CD4-positive, alpha-beta T cell (primary cell): ENCODE measurements at regions of chr20 and their contacts with region 1.

Region 1: DNA sequence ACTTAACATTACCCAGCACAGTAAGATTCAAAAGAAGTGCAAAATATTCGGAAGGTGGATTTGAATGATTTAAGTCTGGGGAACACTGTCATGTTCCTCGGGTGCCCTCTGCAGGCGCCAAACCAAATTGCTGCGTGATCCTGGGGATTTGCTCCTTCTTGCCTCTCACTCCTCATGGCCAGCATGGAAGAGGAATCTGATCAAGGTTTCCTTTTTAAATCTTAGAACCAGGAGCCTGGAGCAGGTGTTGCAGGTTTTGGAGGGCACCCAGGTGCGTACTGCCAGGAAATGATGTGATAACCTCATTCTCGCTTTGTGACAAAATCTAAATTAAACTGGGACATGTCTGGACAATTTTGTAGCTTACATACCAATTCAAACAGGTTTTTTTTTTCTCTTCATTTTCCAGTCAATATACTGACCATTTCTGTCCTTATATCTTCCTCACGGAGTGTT is 8.1 kb upstream of the PFDN4 start:
- DNase-seq: peak; percentile 35 to 79 (median 60)
- ATAC-seq: peak; percentile 71
- H3K4me3 ChIP-seq: no peak overlapping the region
- H3K4me3 Mint-ChIP-seq: no peak overlapping the region
- H3K27ac ChIP-seq: no peak overlapping the region
- H3K27ac Mint-ChIP-seq: no peak overlapping the region
- H3K4me1 ChIP-seq: no peaks in the 10 kb centered on the region
- H3K4me1 Mint-ChIP-seq: no peaks in the 10 kb centered on the region
- H3K27me3 ChIP-seq: no peaks in the 10 kb centered on the region
- H3K27me3 Mint-ChIP-seq: no peaks in the 10 kb centered on the region
- CTCF ChIP-seq: peak; percentile 90

Region 2: DNA sequence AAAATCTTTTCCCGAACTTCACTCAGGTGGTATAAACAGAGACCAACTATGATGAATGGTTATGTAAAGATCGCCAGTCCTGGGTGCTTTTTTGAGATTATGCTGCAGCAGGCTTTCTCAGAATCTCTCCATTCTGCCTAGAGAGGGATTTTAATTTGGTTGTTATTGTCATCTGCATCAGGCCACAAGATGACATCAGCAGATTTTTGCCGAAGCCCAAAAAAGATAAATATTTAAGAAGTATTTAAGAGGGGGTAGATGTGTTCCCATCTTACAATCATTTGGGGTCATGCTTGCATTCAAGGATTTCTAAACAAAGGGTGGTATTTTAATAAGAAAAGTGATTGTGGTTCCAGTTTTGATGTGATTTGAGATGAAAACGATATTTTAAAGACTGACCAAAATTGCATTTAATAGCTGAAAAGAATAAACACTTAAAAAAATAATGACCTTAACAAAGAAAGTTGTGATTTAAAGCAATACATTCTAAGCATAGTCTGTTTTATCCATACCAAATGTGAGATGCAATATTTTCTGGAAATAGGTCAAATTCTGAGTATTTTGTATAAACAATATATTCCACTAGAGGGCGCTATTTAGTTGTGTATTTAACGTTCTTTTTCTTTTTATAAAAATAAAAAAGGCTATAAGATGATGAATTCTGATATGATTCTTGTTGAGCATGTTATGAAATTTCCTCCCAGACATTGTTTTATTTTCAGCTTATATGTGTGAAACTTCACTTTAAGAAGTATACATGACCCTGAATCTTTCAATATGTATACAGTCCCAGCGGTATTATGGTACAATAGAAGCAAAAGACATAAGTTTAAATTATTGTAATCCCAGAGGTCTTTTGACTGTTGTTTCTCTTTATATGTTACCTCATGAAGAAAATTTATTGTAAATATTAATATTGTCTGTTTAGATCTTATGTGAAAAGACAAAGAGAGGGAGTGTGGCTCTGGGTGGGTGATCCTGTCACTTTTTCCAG is 1957.2 kb before region 1 on chr20:
- CTCF ChIA-PET with region 1: no interaction called
- POLR2A ChIA-PET with region 1: no interaction called
- intact Hi-C with region 1: loop called in 1 of 2 experiments (anchors 5 kb)
- DNase-seq: peak in 3 of 14 experiments; percentile 12 to 42 (median 34)
- ATAC-seq: no peak
- H3K4me3 ChIP-seq: no peak overlapping the region
- H3K4me3 Mint-ChIP-seq: no peak overlapping the region
- H3K27ac ChIP-seq: no peak overlapping the region
- H3K27ac Mint-ChIP-seq: no peak overlapping the region
- H3K4me1 ChIP-seq: no peaks in the 10 kb centered on the region
- H3K4me1 Mint-ChIP-seq: peaks cover 5% of the 10 kb centered on the region
- H3K27me3 ChIP-seq: no peaks in the 10 kb centered on the region
- H3K27me3 Mint-ChIP-seq: peaks cover 7% of the 10 kb centered on the region
- CTCF ChIP-seq: peak; percentile 83

Region 3: DNA sequence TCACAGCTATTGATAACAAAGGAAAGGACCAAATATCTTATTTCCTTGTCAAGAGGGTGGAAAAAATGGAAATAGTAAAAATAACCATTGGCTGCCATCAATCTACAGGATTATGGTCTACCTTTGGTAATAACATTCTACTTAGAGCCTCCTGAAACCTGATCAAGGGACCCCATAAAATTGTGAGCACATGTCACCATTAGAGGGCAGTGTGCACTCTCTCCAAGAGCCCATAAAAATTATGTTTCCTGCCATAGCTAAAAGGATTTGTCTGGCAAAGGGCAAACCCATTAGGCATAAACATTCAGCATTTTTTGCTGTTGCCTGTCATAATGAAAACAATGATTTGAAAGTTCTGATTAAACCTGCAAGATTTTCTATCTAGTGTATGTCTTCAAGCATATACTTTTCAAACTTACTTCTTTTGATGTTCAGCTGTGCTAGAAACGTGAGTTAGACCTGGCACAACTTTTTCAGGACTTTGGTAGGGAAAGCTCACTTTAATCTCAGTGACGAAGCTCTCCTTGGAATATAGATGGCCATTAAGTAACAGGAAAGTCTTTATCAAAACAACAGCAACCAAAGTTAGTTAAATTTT is 1887.5 kb before region 1 on chr20:
- CTCF ChIA-PET with region 1: no interaction called
- POLR2A ChIA-PET with region 1: no interaction called
- intact Hi-C with region 1: loop called in 1 of 2 experiments (anchors 5 kb)
- DNase-seq: peak in 13 of 14 experiments; percentile 20 to 83 (median 47)
- ATAC-seq: peak; percentile 73
- H3K4me3 ChIP-seq: no peak overlapping the region
- H3K4me3 Mint-ChIP-seq: no peak overlapping the region
- H3K27ac ChIP-seq: no peak overlapping the region
- H3K27ac Mint-ChIP-seq: no peak overlapping the region
- H3K4me1 ChIP-seq: peaks cover 4% of the 10 kb centered on the region
- H3K4me1 Mint-ChIP-seq: peaks cover 38% of the 10 kb centered on the region
- H3K27me3 ChIP-seq: no peaks in the 10 kb centered on the region
- H3K27me3 Mint-ChIP-seq: no peaks in the 10 kb centered on the region
- CTCF ChIP-seq: peak; percentile 88

Region 4: GRCh38 chr20:53157443-53158408 is 1042.0 kb before region 1 on chr20:
- CTCF ChIA-PET with region 1: no interaction called
- POLR2A ChIA-PET with region 1: no interaction called
- intact Hi-C with region 1: loop called in 1 of 2 experiments (anchors 5 kb)
- DNase-seq: peak in 11 of 14 experiments; percentile 5 to 58 (median 20)
- ATAC-seq: no peak
- H3K4me3 ChIP-seq: no peak overlapping the region
- H3K4me3 Mint-ChIP-seq: no peak overlapping the region
- H3K27ac ChIP-seq: no peak overlapping the region
- H3K27ac Mint-ChIP-seq: no peak overlapping the region
- H3K4me1 ChIP-seq: no peaks in the 10 kb centered on the region
- H3K4me1 Mint-ChIP-seq: peaks cover 39% of the 10 kb centered on the region
- H3K27me3 ChIP-seq: no peaks in the 10 kb centered on the region
- H3K27me3 Mint-ChIP-seq: no peaks in the 10 kb centered on the region
- CTCF ChIP-seq: peak; percentile 50

Region 5: DNA sequence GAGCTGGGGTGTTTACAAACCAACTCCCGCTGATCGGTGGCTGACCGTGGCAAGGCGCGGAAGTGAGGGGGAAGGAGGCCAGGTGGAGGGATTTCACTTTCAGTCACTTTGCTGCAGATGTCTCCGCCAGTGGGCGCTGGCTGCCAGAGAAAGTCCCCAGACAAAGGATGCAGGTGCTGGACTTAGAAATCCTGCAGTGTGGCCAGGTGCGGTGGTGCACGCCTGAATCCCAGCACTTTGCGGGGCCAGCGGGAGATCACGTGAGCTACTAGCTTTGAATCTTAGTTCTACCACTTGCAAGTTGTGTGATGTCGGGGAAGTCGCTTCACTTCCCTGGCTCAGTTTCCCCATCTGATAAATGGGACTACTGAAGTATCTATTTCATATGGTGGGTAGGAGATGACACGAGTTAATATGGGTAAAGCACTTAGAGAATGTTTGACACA is 786.5 kb before region 1 on chr20:
- CTCF ChIA-PET with region 1: no interaction called
- POLR2A ChIA-PET with region 1: no interaction called
- intact Hi-C with region 1: loop called in 1 of 2 experiments (anchors 10 kb)
- DNase-seq: peak; percentile 12 to 70 (median 34)
- ATAC-seq: peak; percentile 24
- H3K4me3 ChIP-seq: no peak overlapping the region
- H3K4me3 Mint-ChIP-seq: no peak overlapping the region
- H3K27ac ChIP-seq: no peak overlapping the region
- H3K27ac Mint-ChIP-seq: no peak overlapping the region
- H3K4me1 ChIP-seq: peaks cover 7% of the 10 kb centered on the region
- H3K4me1 Mint-ChIP-seq: peaks cover 11% of the 10 kb centered on the region
- H3K27me3 ChIP-seq: no peaks in the 10 kb centered on the region
- H3K27me3 Mint-ChIP-seq: no peaks in the 10 kb centered on the region
- CTCF ChIP-seq: peak; percentile 53

Region 6: DNA sequence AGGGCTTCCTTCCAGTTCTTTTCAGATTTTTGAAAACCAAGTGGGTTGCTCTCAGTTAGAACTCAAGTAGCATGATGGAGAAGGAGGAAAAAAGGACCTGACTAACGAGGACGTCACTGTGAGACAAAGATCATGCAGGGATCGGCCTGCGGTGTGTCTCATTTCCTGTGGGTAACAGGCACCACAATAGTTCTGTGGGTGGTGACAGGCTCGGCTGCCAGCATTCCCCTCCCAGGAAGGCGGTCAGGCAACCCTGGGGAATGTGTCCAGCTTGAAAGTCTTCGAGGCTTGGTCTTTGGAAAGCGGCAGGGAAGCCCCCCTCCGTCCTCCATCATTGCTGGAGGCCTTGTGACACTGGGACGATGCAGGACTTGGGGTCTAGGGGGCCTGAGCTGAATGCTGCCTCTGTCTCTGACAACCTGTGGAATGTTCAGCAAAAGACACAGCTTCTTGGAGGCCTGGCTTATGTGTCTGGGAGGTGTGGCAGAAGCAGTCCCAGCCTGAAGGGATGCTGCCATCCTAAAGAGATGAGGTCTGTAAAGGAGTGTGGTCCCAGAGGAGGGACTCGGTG is 250.3 kb before region 1 on chr20:
- CTCF ChIA-PET with region 1: no interaction called
- POLR2A ChIA-PET with region 1: no interaction called
- intact Hi-C with region 1: loop called in 1 of 2 experiments (anchors 5 kb)
- DNase-seq: peak; percentile 59 to 92 (median 74)
- ATAC-seq: peak; percentile 92
- H3K4me3 ChIP-seq: peak overlapping the region; percentile 12
- H3K4me3 Mint-ChIP-seq: peak overlapping the region; percentile 83
- H3K27ac ChIP-seq: peak overlapping the region; percentile 63 to 83
- H3K27ac Mint-ChIP-seq: peak overlapping the region; percentile 99
- H3K4me1 ChIP-seq: peaks cover 31% of the 10 kb centered on the region
- H3K4me1 Mint-ChIP-seq: peaks cover 36% of the 10 kb centered on the region
- H3K27me3 ChIP-seq: no peaks in the 10 kb centered on the region
- H3K27me3 Mint-ChIP-seq: no peaks in the 10 kb centered on the region
- CTCF ChIP-seq: no peak

Region 7: DNA sequence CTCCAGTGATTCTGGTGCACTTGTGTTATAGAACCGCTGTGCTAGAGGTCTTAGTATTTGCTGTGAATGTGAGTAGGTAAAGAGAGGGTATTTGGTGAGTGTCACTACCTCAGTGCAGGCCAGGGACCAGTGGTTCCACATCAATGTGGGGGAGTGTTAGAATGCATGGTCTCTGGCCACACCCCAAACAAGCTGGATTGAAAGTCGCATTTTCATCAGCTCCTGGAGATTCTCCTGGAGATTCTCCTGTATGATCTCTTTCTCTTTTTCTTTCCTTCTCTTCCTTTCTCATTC is 102.6 kb before region 1 on chr20:
- CTCF ChIA-PET with region 1: no interaction called
- POLR2A ChIA-PET with region 1: no interaction called
- intact Hi-C with region 1: loop called (anchors 1 to 2 kb)
- DNase-seq: no peak
- ATAC-seq: no peak
- H3K4me3 ChIP-seq: no peak overlapping the region
- H3K4me3 Mint-ChIP-seq: no peak overlapping the region
- H3K27ac ChIP-seq: no peak overlapping the region
- H3K27ac Mint-ChIP-seq: no peak overlapping the region
- H3K4me1 ChIP-seq: no peaks in the 10 kb centered on the region
- H3K4me1 Mint-ChIP-seq: no peaks in the 10 kb centered on the region
- H3K27me3 ChIP-seq: no peaks in the 10 kb centered on the region
- H3K27me3 Mint-ChIP-seq: peaks cover 11% of the 10 kb centered on the region
- CTCF ChIP-seq: no peak